ENCODE measurements at regions of chr3 and their contacts with region 1.

Region 1: GRCh38 chr3:95088464-95088863 is 1025.6 kb downstream of the NSUN3 start:
- DNase-seq: no peak
- ATAC-seq: no peak
- H3K4me3 ChIP-seq: no peak overlapping the region
- H3K27ac ChIP-seq: no peak overlapping the region
- H3K4me1 ChIP-seq: no peaks in the 10 kb centered on the region
- H3K27me3 ChIP-seq: no peaks in the 10 kb centered on the region
- CTCF ChIP-seq: no peak

Region 2: GRCh38 chr3:95028688-95029087 is 59.8 kb before region 1 on chr3:
- CTCF ChIA-PET with region 1: no interaction called
- POLR2A ChIA-PET with region 1: no interaction called
- in situ Hi-C with region 1: no loop called
- intact Hi-C with region 1: loop called (anchors 10 kb)
- DNase-seq: no peak
- ATAC-seq: no peak
- H3K4me3 ChIP-seq: no peak overlapping the region
- H3K27ac ChIP-seq: no peak overlapping the region
- H3K4me1 ChIP-seq: no peaks in the 10 kb centered on the region
- H3K27me3 ChIP-seq: no peaks in the 10 kb centered on the region
- CTCF ChIP-seq: no peak

Region 3: DNA sequence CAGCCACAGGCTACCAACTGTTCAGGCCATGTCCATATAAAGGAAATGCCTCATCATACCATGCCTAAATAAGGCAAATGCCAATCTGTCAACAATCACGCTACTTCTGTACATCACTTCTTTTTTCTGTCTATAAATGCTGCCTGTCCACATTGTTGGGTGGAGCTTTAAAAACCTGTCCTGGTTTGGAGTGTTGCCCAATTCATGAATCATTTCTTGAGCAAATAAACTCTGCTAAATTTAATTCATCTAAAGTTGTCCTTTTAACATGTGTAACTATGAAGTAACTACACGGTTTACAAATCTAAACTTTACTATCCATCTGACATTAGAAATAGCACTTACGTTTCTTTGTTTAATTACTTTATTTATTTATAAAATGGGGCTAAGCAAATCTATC is 66.4 kb after region 1 on chr3:
- CTCF ChIA-PET with region 1: no interaction called
- POLR2A ChIA-PET with region 1: no interaction called
- in situ Hi-C with region 1: no loop called
- intact Hi-C with region 1: no loop called
- DNase-seq: no peak
- ATAC-seq: no peak
- H3K4me3 ChIP-seq: no peak overlapping the region
- H3K27ac ChIP-seq: no peak overlapping the region
- H3K4me1 ChIP-seq: no peaks in the 10 kb centered on the region
- H3K27me3 ChIP-seq: no peaks in the 10 kb centered on the region
- CTCF ChIP-seq: no peak

Region 4: GRCh38 chr3:95511828-95512227 is 423.4 kb after region 1 on chr3:
- CTCF ChIA-PET with region 1: no interaction called
- POLR2A ChIA-PET with region 1: no interaction called
- in situ Hi-C with region 1: no loop called
- intact Hi-C with region 1: no loop called
- DNase-seq: no peak
- ATAC-seq: no peak
- H3K4me3 ChIP-seq: no peak overlapping the region
- H3K27ac ChIP-seq: no peak overlapping the region
- H3K4me1 ChIP-seq: no peaks in the 10 kb centered on the region
- H3K27me3 ChIP-seq: no peaks in the 10 kb centered on the region
- CTCF ChIP-seq: no peak; the same call in 1 of the 2 replicates

Measured in Panc1 (cell line).